ENCODE measurements at regions of chr17 and their contacts with region 1.

Region 1: DNA sequence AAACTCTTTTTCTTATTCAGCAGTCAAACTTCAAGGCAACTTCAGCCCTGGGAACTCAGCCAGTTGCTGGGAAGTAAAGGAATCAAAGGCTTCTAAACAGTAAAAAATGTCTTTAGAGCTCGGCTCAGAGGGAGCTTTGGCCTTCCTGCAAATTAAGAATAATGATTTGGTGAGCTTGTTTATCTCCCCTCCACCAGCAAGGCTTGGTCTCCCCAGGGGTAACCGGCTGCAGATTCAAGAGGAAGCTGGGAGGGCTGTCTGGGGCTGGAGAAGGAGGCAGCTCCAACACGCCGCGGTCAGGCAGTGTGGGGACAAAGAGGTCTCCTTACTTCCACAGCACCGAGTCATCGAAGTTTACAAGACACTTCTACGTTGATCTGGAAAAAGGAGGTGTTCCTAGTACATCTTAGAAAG is 17.7 kb upstream of the DOC2B start:
- DNase-seq: peak; percentile 16
- ATAC-seq: peak; percentile 53; the same call in 1 of the 2 replicates
- H3K4me3 ChIP-seq: no peak overlapping the region
- H3K27ac ChIP-seq: no peak overlapping the region
- H3K4me1 ChIP-seq: no peaks in the 10 kb centered on the region
- H3K27me3 ChIP-seq: peaks cover 34% of the 10 kb centered on the region
- CTCF ChIP-seq: no peak
- POLR2A ChIP-seq: no peak
- RAD21 ChIP-seq: no peak

Region 2: DNA sequence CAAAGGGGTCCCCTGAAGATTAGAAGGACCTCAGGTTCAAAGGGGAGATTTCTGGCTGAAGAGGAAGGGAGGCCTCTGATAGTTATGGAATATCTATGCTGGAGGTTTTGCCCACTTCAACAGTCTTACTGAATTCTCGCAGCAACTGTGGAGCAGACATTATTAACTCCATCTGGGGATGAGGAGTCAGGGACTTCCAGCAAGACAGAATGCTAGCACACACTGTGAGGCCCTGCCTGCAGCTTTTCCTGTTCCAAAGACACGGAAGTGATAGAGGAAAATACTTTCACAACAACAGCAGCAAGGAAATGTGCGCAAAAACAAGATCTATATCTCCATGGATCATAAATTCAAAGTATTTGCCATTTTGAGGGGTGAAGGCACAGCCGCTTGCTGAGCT is 80.6 kb after region 1 on chr17:
- CTCF ChIA-PET with region 1: no interaction called
- POLR2A ChIA-PET with region 1: no interaction called
- dilution Hi-C with region 1: no loop called
- in situ Hi-C with region 1: loop called (anchors 5 kb)
- intact Hi-C with region 1: no loop called
- DNase-seq: no peak
- ATAC-seq: no peak
- H3K4me3 ChIP-seq: no peak overlapping the region
- H3K27ac ChIP-seq: no peak overlapping the region
- H3K4me1 ChIP-seq: no peaks in the 10 kb centered on the region
- H3K27me3 ChIP-seq: peaks cover 18% of the 10 kb centered on the region
- CTCF ChIP-seq: no peak
- POLR2A ChIP-seq: no peak
- RAD21 ChIP-seq: no peak

Measured in IMR-90 (cell line).